PC-3 (cell line): ENCODE measurements at regions of chr3 and their contacts with region 1.

Region 1: GRCh38 chr3:165854696-165855095 is 17.5 kb upstream of the BCHE start:
- DNase-seq: peak; percentile 58
- ATAC-seq: peak; percentile 21
- H3K4me3 ChIP-seq: no peak overlapping the region
- H3K27ac ChIP-seq: no peak overlapping the region
- H3K4me1 ChIP-seq: peaks cover 8% of the 10 kb centered on the region
- H3K27me3 ChIP-seq: no peaks in the 10 kb centered on the region
- CTCF ChIP-seq: peak; percentile 85

Region 2: GRCh38 chr3:165254812-165255211 is 599.9 kb before region 1 on chr3:
- CTCF ChIA-PET with region 1: interaction called, 6 read pairs
- POLR2A ChIA-PET with region 1: no interaction called
- intact Hi-C with region 1: loop called (anchors 10 kb)
- DNase-seq: peak; percentile 69
- ATAC-seq: peak; percentile 89
- H3K4me3 ChIP-seq: no peak overlapping the region
- H3K27ac ChIP-seq: no peak overlapping the region
- H3K4me1 ChIP-seq: peaks cover 4% of the 10 kb centered on the region
- H3K27me3 ChIP-seq: no peaks in the 10 kb centered on the region
- CTCF ChIP-seq: peak; percentile 69

Region 3: GRCh38 chr3:165339753-165340152 is 514.9 kb before region 1 on chr3:
- CTCF ChIA-PET with region 1: no interaction called
- POLR2A ChIA-PET with region 1: no interaction called
- intact Hi-C with region 1: loop called (anchors 5 kb)
- DNase-seq: peak; percentile 43
- ATAC-seq: peak; percentile 67; the same call in 1 of the 2 replicates
- H3K4me3 ChIP-seq: no peak overlapping the region
- H3K27ac ChIP-seq: no peak overlapping the region
- H3K4me1 ChIP-seq: no peaks in the 10 kb centered on the region
- H3K27me3 ChIP-seq: no peaks in the 10 kb centered on the region
- CTCF ChIP-seq: peak; percentile 68

Region 4: GRCh38 chr3:165835431-165835830 is 19.3 kb before region 1 on chr3:
- CTCF ChIA-PET with region 1: no interaction called
- POLR2A ChIA-PET with region 1: no interaction called
- intact Hi-C with region 1: no loop called
- DNase-seq: no peak
- ATAC-seq: no peak
- H3K4me3 ChIP-seq: no peak overlapping the region
- H3K27ac ChIP-seq: no peak overlapping the region
- H3K4me1 ChIP-seq: no peaks in the 10 kb centered on the region
- H3K27me3 ChIP-seq: no peaks in the 10 kb centered on the region
- CTCF ChIP-seq: no peak

Region 5: DNA sequence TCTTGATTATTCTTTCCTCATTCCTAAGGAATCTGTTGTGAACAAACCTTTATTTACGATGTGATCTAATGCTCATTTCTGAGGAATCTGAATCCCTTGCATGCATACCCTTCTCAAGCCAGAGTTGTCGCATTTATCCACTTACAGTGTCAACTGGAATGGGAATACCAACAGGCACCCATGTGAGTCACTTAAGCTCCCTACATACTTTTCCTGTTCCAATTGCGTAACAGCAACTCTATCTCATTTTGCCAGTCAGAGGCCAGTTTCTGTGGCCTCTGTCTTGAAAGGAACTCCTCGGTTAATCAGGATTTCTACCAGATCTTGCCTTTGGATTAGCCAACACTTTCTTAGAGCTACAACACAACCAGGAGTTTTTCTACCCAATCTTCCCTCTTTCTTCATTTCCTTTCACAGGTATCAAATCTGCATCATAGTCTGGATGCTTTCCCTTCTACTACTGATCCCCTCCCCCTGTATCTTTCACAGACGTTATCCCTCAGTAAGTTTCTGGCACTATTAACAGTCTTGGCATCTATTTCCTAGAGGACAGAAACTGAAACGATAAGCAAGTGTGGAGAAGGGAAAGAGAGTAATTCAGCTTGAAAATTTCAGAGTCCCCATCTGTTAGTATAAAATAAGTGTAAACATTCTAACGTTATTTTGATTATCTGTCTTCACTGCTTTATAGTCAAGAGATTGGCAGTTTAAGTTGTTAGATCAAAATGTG is 49.4 kb after region 1 on chr3:
- CTCF ChIA-PET with region 1: no interaction called
- POLR2A ChIA-PET with region 1: no interaction called
- intact Hi-C with region 1: no loop called
- DNase-seq: peak; percentile 40
- ATAC-seq: no peak
- H3K4me3 ChIP-seq: no peak overlapping the region
- H3K27ac ChIP-seq: no peak overlapping the region
- H3K4me1 ChIP-seq: no peaks in the 10 kb centered on the region
- H3K27me3 ChIP-seq: no peaks in the 10 kb centered on the region
- CTCF ChIP-seq: no peak